Ovary (tissue), 10 donors: ENCODE measurements at regions of chr2 and their contacts with region 1.

Region 1: GRCh38 chr2:120312861-120313694 is 32.9 kb upstream of the INHBB start:
- DNase-seq: peak; percentile 80 to 88 (median 87)
- H3K4me3 ChIP-seq: peak overlapping the region; percentile 47
- H3K27ac ChIP-seq: peak overlapping the region in 1 of 2 donors; percentile 75
- H3K4me1 ChIP-seq: peaks cover 3% of the 10 kb centered on the region
- H3K27me3 ChIP-seq: no peaks in the 10 kb centered on the region
- CTCF ChIP-seq: peak; percentile 75 to 87 (median 86)
- EP300 ChIP-seq: no peak
- POLR2A ChIP-seq: peak; percentile 19

Region 2: DNA sequence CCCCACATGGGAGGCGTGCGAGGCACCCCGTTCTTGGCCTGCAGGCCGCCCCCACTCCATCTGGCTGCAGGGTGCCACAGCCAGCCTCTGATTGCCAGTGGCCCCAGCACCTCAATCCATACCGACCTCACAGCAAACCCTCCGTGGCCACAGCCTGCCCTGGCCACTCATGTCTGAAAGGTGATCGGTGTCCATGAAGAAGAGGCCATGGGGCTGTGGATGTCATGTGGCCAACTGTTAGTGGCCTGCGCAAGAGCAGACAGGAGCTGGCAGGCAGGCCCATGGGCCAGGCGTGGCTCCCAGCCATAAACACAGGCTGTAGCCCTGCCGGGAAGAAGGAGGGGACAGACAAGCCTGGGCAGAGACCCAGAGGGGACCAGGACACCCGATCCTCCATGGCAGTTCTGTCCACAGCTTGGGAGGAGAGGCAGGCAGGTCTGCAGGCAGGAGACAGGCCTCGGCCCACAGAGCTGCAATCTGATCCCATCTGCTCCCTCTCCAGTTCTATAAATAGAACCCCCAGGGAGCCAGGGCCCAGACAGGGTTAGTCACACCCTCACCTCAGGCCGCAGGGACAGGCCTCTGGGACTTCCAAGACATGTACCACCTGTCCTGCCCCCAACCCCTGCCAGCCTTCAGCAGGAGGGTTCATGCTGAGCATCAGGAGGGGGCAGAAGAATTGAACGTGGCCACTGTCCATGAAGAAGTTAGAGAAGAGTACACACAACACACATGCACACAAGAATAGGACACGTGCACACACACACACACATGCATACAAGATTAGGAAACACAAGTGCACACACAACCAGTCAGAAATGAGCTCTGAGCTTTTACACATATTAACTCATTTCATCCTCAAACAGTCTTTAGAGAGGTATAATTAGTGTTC is 1072.5 kb before region 1 on chr2:
- intact Hi-C with region 1: no loop called
- DNase-seq: no peak
- H3K4me3 ChIP-seq: no peak overlapping the region
- H3K27ac ChIP-seq: no peak overlapping the region
- H3K4me1 ChIP-seq: no peaks in the 10 kb centered on the region
- H3K27me3 ChIP-seq: no peaks in the 10 kb centered on the region
- CTCF ChIP-seq: no peak
- EP300 ChIP-seq: no peak
- POLR2A ChIP-seq: no peak

Region 3: GRCh38 chr2:119766944-119767343 is 546.1 kb before region 1 on chr2:
- intact Hi-C with region 1: no loop called
- DNase-seq: no peak
- H3K4me3 ChIP-seq: no peak overlapping the region
- H3K27ac ChIP-seq: no peak overlapping the region
- H3K4me1 ChIP-seq: no peaks in the 10 kb centered on the region
- H3K27me3 ChIP-seq: no peaks in the 10 kb centered on the region
- CTCF ChIP-seq: no peak
- EP300 ChIP-seq: no peak
- POLR2A ChIP-seq: no peak

Region 4: GRCh38 chr2:120195553-120195952 is 117.5 kb before region 1 on chr2:
- intact Hi-C with region 1: no loop called
- DNase-seq: no peak
- H3K4me3 ChIP-seq: no peak overlapping the region
- H3K27ac ChIP-seq: no peak overlapping the region
- H3K4me1 ChIP-seq: no peaks in the 10 kb centered on the region
- H3K27me3 ChIP-seq: no peaks in the 10 kb centered on the region
- CTCF ChIP-seq: no peak
- EP300 ChIP-seq: no peak
- POLR2A ChIP-seq: no peak

Region 5: GRCh38 chr2:120252225-120253021 is 60.7 kb before region 1 on chr2 and contains the start of gene RALB:
- intact Hi-C with region 1: loop called in 2 of 4 experiments (anchors 5 to 10 kb)
- DNase-seq: peak; percentile 99 to 100 (median 99)
- H3K4me3 ChIP-seq: peak within 1 kb of the TSS; percentile 76
- H3K27ac ChIP-seq: peak within 1 kb of the TSS; percentile 82 to 97
- H3K4me1 ChIP-seq: peaks cover 2% of the 10 kb centered on the region
- H3K27me3 ChIP-seq: no peaks in the 10 kb centered on the region
- CTCF ChIP-seq: no peak
- EP300 ChIP-seq: no peak
- POLR2A ChIP-seq: peak; percentile 21
- total RNA-seq, gene RALB: 18.2 to 41.2 (median 32.5) TPM